K562 (cell line): ENCODE measurements at regions of chr6 and their contacts with region 1.

Region 1: DNA sequence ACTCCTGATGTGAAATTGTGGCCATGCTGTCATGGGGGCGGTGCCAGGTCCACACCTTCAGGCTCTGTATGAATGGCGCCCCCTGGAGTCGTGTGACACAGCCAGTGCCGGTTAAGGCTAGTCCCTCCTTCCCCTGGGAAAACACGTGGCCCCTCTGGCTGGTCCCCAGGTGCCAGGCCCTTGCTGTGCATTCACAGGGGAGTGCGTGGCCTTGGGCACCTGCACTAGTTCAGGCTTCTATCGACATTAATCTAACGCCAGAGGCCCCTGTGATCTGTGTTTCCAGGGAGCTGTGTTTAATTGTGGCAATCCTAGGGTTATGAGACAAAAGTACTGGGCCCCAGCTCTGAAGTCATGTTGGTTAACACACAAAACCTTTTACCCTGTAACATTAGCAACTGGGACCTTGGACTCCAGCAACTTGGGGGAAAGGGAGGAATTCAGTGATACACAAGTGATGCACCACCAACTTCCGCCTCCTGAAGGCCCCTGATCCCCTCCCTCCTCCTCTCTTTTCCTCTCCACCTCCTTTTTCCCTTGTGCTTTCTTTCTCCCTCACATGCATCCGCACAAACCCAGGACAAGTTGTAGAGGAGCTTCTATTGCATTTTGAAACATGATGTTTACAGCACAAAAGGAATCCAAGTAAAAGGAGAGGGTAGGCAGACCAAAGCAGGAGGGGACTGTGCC is 74.0 kb downstream of the SSR1 start:
- DNase-seq: peak; percentile 86 to 95 (median 86)
- ATAC-seq: peak; percentile 90
- H3K4me3 ChIP-seq: no peak overlapping the region
- H3K27ac ChIP-seq: peak overlapping the region; percentile 5; the same call in 2 of the 3 replicates
- H3K4me1 ChIP-seq: peaks cover 30 to 32% of the 10 kb centered on the region in 2 experiments
- H3K27me3 ChIP-seq: no peaks in the 10 kb centered on the region
- CTCF ChIP-seq: peak; percentile 92 to 96 (median 94)
- EP300 ChIP-seq: peak; percentile 53
- POLR2A ChIP-seq: no peak; the same call in 1 of the 2 replicates
- RAD21 ChIP-seq: peak; percentile 82 to 94

Region 2: GRCh38 chr6:6676910-6677441 is 562.1 kb before region 1 on chr6:
- CTCF ChIA-PET with region 1: interaction called, 15 read pairs
- POLR2A ChIA-PET with region 1: interaction called, 3 read pairs
- in situ Hi-C with region 1: loop called (anchors 25 kb)
- intact Hi-C with region 1: loop called (anchors 2 kb)
- DNase-seq: peak; percentile 73 to 91 (median 75)
- ATAC-seq: peak; percentile 83
- H3K4me3 ChIP-seq: no peak overlapping the region
- H3K27ac ChIP-seq: no peak overlapping the region
- H3K4me1 ChIP-seq: peaks cover 8 to 38% of the 10 kb centered on the region in 2 experiments; a peak in 4 of 5 replicates
- H3K27me3 ChIP-seq: no peaks in the 10 kb centered on the region
- CTCF ChIP-seq: peak; percentile 92 to 97 (median 97)
- EP300 ChIP-seq: peak; percentile 13; the same call in 1 of the 2 replicates
- POLR2A ChIP-seq: no peak
- RAD21 ChIP-seq: peak; percentile 98

Region 3: GRCh38 chr6:6788394-6789020 is 450.5 kb before region 1 on chr6:
- CTCF ChIA-PET with region 1: no interaction called
- POLR2A ChIA-PET with region 1: interaction called, 4 read pairs
- in situ Hi-C with region 1: no loop called
- intact Hi-C with region 1: loop called (anchors 5 kb)
- DNase-seq: peak; percentile 50 to 58 (median 58)
- ATAC-seq: peak; percentile 84
- H3K4me3 ChIP-seq: no peak overlapping the region
- H3K27ac ChIP-seq: no peak overlapping the region
- H3K4me1 ChIP-seq: peaks cover 0 to 20% of the 10 kb centered on the region in 2 experiments; a peak in 4 of 5 replicates
- H3K27me3 ChIP-seq: no peaks in the 10 kb centered on the region
- CTCF ChIP-seq: peak; percentile 69 to 82 (median 81)
- EP300 ChIP-seq: no peak
- POLR2A ChIP-seq: no peak
- RAD21 ChIP-seq: peak; percentile 77 to 85

Region 4: DNA sequence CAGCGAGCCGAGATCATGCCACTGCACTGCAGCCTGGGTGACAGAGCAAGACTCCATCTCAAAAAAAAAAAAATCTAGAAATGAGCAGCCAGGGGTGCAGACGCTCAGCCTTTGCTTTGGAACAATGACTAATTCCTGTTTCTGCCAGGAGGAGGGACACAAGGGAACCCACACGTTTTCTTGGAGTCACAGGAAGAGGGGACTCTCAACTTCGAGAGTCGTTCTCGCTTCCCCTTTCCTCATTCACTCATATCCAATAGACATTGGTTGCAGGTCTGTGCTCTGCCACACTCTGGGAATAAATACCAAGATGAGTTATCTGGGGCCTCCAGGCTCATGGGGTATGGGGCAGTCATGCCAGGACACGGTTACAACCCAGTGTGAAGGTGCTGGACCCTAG is 222.8 kb before region 1 on chr6:
- CTCF ChIA-PET with region 1: no interaction called
- POLR2A ChIA-PET with region 1: no interaction called
- in situ Hi-C with region 1: no loop called
- intact Hi-C with region 1: loop called (anchors 10 kb)
- DNase-seq: no peak
- ATAC-seq: no peak; the same call in 2 of the 3 replicates
- H3K4me3 ChIP-seq: no peak overlapping the region
- H3K27ac ChIP-seq: no peak overlapping the region
- H3K4me1 ChIP-seq: no peaks in the 10 kb centered on the region; a peak in 1 of 5 replicates
- H3K27me3 ChIP-seq: no peaks in the 10 kb centered on the region
- CTCF ChIP-seq: no peak
- EP300 ChIP-seq: no peak
- POLR2A ChIP-seq: no peak
- RAD21 ChIP-seq: no peak

Region 5: DNA sequence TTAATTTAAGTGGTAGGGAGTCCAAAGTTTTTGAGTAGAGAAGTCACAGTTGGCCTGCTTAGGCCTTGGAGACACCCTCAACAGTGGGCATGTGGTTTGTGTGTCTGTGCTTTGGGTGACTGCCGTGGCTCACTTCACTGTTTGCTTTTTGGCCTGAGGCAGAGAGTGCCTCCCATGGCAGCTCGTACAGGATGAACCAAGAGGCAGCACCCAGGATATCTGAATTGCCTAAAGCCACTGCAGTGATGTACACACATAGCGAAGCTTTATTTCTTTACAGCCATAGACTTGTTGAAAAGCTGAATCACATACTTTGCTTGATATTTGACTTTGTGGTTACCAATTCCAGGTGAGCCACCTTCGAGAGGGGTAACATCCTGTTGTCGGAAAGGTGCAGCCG is 109.7 kb before region 1 on chr6:
- CTCF ChIA-PET with region 1: no interaction called
- POLR2A ChIA-PET with region 1: no interaction called
- in situ Hi-C with region 1: no loop called
- intact Hi-C with region 1: no loop called
- DNase-seq: no peak
- ATAC-seq: peak; percentile 16
- H3K4me3 ChIP-seq: no peak overlapping the region
- H3K27ac ChIP-seq: 0 out of 3 replicates have a peak overlapping the region, but pooled peaks have one; percentile 11
- H3K4me1 ChIP-seq: peaks cover 15 to 37% of the 10 kb centered on the region in 2 experiments; a peak in 4 of 5 replicates
- H3K27me3 ChIP-seq: no peaks in the 10 kb centered on the region
- CTCF ChIP-seq: no peak
- EP300 ChIP-seq: no peak
- POLR2A ChIP-seq: no peak
- RAD21 ChIP-seq: no peak

Region 6: GRCh38 chr6:7166410-7167305 is 72.4 kb before region 1 on chr6:
- CTCF ChIA-PET with region 1: no interaction called
- POLR2A ChIA-PET with region 1: no interaction called
- in situ Hi-C with region 1: no loop called
- intact Hi-C with region 1: loop called (anchors 2 kb)
- DNase-seq: peak; percentile 82 to 93 (median 84)
- ATAC-seq: peak; percentile 70
- H3K4me3 ChIP-seq: peak overlapping the region; percentile 6; the same call in 1 of the 2 replicates
- H3K27ac ChIP-seq: peak overlapping the region; percentile 88
- H3K4me1 ChIP-seq: peaks cover 78 to 94% of the 10 kb centered on the region in 2 experiments
- H3K27me3 ChIP-seq: no peaks in the 10 kb centered on the region
- CTCF ChIP-seq: no peak
- EP300 ChIP-seq: peak; percentile 95
- POLR2A ChIP-seq: peak; percentile 17; the same call in 1 of the 2 replicates
- RAD21 ChIP-seq: peak in 1 of 2 experiments; percentile 14; a peak in 1 of 4 replicates

Region 7: DNA sequence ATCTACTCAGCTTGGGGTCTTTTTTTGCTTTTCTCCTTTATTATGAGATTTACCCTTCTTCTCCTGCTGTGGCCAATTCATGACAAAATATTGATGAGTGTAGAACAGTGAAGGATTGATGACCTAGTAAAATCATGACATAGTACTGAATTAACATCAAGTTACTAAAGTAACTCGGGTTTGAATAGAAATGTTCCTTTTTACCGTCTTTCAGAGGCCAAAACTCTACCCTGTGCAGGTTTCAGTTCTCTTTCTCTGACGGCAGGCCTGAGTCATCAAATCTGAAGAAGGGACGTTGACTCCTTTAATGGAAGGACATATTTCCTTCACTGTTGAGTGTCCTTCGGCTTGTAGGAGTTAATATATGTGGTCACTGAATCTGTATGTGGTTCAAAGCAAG is 50.6 kb before region 1 on chr6:
- CTCF ChIA-PET with region 1: no interaction called
- POLR2A ChIA-PET with region 1: no interaction called
- in situ Hi-C with region 1: no loop called
- intact Hi-C with region 1: no loop called
- DNase-seq: no peak
- ATAC-seq: no peak
- H3K4me3 ChIP-seq: no peak overlapping the region
- H3K27ac ChIP-seq: no peak overlapping the region
- H3K4me1 ChIP-seq: no peaks in the 10 kb centered on the region
- H3K27me3 ChIP-seq: no peaks in the 10 kb centered on the region
- CTCF ChIP-seq: no peak
- EP300 ChIP-seq: no peak
- POLR2A ChIP-seq: no peak
- RAD21 ChIP-seq: no peak